Naive thymus-derived CD4-positive, alpha-beta T cell (primary cell): ENCODE measurements at regions of chr6 and their contacts with region 1.

Region 1: DNA sequence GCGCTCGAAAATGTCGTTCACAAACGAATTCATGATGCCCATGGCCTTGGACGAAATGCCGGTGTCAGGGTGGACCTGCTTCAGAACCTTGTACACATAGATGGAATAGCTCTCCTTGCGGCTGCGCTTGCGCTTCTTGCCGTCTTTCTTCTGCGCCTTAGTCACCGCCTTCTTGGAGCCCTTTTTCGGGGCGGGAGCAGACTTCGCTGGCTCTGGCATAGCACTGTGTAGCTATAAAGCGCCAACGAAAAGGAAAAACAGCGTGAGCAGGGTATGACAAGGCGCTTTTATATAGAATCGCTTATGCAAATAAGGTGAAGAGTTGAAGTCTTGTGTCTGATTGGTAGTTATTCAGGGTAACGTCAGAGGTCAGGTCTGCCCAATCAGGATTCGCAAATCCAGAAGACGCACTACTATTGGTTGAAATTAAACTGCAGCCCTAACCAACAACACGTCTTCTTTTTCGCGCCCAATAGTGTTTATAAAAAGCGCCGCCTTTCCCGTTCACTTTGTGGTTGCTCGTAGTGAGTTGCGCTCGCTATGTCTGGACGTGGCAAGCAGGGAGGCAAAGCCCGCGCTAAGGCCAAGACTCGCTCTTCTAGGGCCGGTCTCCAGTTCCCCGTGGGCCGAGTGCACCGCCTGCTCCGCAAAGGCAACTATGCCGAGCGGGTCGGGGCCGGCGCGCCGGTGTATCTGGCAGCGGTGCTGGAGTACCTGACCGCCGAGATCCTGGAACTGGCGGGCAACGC is 114.8 kb upstream of the PRSS16 start:
- DNase-seq: peak; percentile 73 to 99 (median 97)
- ATAC-seq: peak; percentile 93
- H3K4me3 ChIP-seq: peak overlapping the region; percentile 90
- H3K4me3 Mint-ChIP-seq: no peak overlapping the region
- H3K27ac ChIP-seq: peak overlapping the region; percentile 81
- H3K27ac Mint-ChIP-seq: no peak overlapping the region
- H3K4me1 ChIP-seq: peaks cover 10 to 18% of the 10 kb centered on the region in 2 donors
- H3K4me1 Mint-ChIP-seq: peaks cover 6 to 49% (median 21%) of the 10 kb centered on the region in 7 donors
- H3K27me3 ChIP-seq: no peaks in the 10 kb centered on the region
- H3K27me3 Mint-ChIP-seq: no peaks in the 10 kb centered on the region

Region 2: GRCh38 chr6:26031595-26032339 is 1100.9 kb before region 1 on chr6:
- CTCF ChIA-PET with region 1: no interaction called
- POLR2A ChIA-PET with region 1: interaction called, 33 read pairs
- intact Hi-C with region 1: loop called (anchors 1 to 2 kb)
- DNase-seq: peak; percentile 56 to 94 (median 90)
- ATAC-seq: peak; percentile 79
- H3K4me3 ChIP-seq: peak overlapping the region; percentile 70
- H3K4me3 Mint-ChIP-seq: peak overlapping the region; percentile 89 to 98 (median 96)
- H3K27ac ChIP-seq: peak overlapping the region; percentile 69
- H3K27ac Mint-ChIP-seq: peak overlapping the region; percentile 93 to 98 (median 96)
- H3K4me1 ChIP-seq: peaks cover 23 to 31% of the 10 kb centered on the region in 2 donors
- H3K4me1 Mint-ChIP-seq: peaks cover 14 to 69% (median 43%) of the 10 kb centered on the region in 7 donors
- H3K27me3 ChIP-seq: no peaks in the 10 kb centered on the region
- H3K27me3 Mint-ChIP-seq: peaks cover 0 to 7% (median 0%) of the 10 kb centered on the region in 5 donors

Region 3: DNA sequence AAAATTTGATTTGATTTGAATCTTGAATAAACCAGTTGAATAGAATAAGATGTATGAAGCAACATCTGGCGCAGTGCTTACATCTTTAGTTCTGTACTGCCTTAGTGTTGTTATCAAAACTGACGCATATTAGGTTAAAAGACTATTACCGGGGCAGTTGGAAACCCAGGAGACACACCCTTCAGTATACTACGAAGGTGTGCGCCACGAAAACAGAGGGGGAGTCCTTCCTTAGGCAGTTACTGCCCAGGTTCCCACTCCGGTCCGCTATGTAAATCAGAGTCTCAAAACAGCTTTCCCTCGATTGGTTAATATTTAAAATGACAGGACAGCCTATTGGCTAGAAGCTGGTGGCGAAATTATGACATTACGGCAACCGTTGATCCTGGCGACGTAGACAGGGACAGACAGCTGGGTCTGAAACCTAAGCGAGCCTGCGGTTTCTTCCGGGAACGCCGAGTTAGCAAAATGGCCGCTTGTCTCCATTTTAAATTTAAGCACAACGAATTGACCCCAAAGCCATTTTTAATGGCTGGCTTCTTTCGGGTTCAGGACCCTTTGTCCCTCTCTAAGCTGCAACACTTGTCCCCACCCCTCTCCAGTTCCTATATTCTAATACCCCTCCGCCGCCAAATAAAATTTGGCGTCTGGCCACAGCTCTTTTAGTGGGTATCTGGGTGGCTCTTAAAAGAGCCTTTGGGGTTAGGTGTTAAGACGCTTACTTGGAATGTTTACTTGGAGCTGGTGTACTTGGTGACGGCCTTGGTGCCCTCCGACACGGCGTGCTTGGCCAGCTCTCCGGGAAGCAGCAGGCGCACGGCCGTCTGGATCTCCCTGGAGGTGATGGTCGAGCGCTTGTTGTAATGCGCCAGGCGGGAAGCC is 1009.7 kb before region 1 on chr6:
- CTCF ChIA-PET with region 1: no interaction called
- POLR2A ChIA-PET with region 1: interaction called, 34 read pairs
- intact Hi-C with region 1: loop called in 1 of 2 experiments (anchors 1 kb)
- DNase-seq: peak; percentile 68 to 99 (median 96)
- ATAC-seq: peak; percentile 78
- H3K4me3 ChIP-seq: peak overlapping the region; percentile 94
- H3K4me3 Mint-ChIP-seq: peak overlapping the region; percentile 92 to 100 (median 98)
- H3K27ac ChIP-seq: peak overlapping the region; percentile 86
- H3K27ac Mint-ChIP-seq: peak overlapping the region; percentile 97 to 100 (median 99)
- H3K4me1 ChIP-seq: peaks cover 18 to 23% of the 10 kb centered on the region in 2 donors
- H3K4me1 Mint-ChIP-seq: peaks cover 22 to 54% (median 30%) of the 10 kb centered on the region in 7 donors
- H3K27me3 ChIP-seq: no peaks in the 10 kb centered on the region
- H3K27me3 Mint-ChIP-seq: peaks cover 0 to 21% (median 0%) of the 10 kb centered on the region in 5 donors

Region 4: DNA sequence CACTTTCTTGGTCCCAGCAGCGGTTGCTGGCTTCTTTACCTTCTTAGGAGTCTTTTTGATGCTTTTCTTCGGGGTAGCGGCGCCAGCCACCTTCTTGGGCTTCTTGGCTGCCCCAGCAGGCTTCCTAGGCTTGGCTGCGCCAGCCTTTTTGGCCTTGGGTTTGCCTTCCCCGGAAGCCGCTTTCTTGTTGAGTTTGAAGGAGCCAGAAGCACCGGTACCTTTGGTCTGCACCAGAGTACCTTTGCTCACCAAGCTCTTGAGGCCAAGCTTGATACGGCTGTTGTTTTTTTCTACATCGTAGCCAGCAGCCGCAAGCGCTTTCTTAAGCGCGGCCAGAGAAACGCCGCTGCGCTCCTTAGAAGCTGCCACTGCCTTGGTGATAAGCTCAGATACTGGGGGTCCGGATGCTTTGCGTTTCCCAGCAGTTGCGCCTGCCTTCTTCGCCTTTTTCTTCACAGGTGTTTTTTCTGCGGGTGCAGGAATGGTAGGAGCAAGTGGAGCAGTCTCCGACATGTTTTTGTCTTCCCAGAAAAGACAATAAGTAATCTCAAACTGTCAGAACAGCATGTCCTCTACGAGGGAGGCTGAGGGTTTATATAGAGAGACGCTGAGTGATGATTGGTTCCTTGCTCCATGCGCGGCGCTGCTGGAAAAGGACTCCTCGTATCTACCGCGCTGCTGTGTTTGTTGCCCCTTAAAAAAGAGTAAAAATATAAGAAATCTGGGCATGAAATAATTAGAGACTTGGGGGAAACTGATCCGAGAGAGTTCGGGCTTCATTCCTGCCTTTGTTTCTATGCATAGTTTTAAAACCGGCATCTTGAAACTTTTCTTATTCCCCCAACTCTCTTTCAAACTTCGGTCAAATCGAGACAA is 898.0 kb before region 1 on chr6:
- CTCF ChIA-PET with region 1: no interaction called
- POLR2A ChIA-PET with region 1: interaction called, 30 read pairs
- intact Hi-C with region 1: no loop called
- DNase-seq: peak; percentile 48 to 94 (median 85)
- ATAC-seq: peak; percentile 80
- H3K4me3 ChIP-seq: peak overlapping the region; percentile 93
- H3K4me3 Mint-ChIP-seq: peak overlapping the region; percentile 87 to 99 (median 94)
- H3K27ac ChIP-seq: peak overlapping the region; percentile 87
- H3K27ac Mint-ChIP-seq: peak overlapping the region; percentile 93 to 100 (median 98)
- H3K4me1 ChIP-seq: peaks cover under 1 to 18% of the 10 kb centered on the region in 2 donors
- H3K4me1 Mint-ChIP-seq: peaks cover 18 to 52% (median 38%) of the 10 kb centered on the region in 7 donors
- H3K27me3 ChIP-seq: no peaks in the 10 kb centered on the region
- H3K27me3 Mint-ChIP-seq: peaks cover 0 to 15% (median 0%) of the 10 kb centered on the region in 5 donors

Region 5: DNA sequence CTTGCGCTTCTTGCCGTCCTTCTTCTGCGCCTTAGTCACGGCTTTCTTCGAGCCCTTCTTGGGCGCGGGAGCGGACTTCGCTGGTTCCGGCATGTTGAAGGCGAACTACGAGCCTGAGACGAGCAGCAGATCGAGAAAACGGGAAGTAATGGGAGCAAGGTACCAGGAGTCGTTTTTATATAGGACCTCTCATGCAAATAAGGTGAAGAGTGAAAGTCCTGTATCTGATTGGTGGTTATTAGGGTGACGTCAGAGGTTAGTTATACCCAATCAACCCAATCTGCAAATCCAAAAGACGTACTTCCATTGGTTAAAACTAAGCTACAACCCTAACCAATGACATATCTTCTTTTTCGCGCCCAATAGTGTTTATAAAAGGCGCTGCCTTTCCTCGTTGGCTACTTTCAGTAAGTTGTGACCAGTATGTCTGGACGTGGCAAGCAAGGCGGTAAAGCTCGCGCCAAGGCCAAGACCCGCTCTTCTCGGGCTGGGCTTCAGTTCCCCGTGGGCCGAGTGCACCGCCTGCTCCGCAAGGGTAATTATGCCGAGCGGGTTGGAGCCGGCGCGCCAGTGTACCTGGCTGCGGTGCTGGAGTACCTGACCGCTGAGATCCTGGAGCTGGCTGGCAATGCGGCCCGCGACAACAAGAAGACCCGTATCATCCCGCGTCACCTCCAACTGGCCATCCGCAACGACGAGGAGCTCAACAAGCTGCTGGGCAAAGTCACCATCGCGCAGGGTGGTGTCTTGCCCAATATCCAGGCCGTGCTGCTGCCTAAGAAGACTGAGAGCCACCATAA is 14.2 kb after region 1 on chr6:
- CTCF ChIA-PET with region 1: interaction called, 45 read pairs
- POLR2A ChIA-PET with region 1: interaction called, 795 read pairs
- intact Hi-C with region 1: loop called (anchors 1 kb)
- DNase-seq: peak; percentile 71 to 96 (median 92)
- ATAC-seq: peak; percentile 92
- H3K4me3 ChIP-seq: peak overlapping the region; percentile 90
- H3K4me3 Mint-ChIP-seq: no peak overlapping the region
- H3K27ac ChIP-seq: peak overlapping the region; percentile 89
- H3K27ac Mint-ChIP-seq: no peak overlapping the region
- H3K4me1 ChIP-seq: peaks cover 6 to 7% of the 10 kb centered on the region in 2 donors
- H3K4me1 Mint-ChIP-seq: peaks cover 0 to 26% (median 14%) of the 10 kb centered on the region in 7 donors
- H3K27me3 ChIP-seq: no peaks in the 10 kb centered on the region
- H3K27me3 Mint-ChIP-seq: no peaks in the 10 kb centered on the region

Region 6: DNA sequence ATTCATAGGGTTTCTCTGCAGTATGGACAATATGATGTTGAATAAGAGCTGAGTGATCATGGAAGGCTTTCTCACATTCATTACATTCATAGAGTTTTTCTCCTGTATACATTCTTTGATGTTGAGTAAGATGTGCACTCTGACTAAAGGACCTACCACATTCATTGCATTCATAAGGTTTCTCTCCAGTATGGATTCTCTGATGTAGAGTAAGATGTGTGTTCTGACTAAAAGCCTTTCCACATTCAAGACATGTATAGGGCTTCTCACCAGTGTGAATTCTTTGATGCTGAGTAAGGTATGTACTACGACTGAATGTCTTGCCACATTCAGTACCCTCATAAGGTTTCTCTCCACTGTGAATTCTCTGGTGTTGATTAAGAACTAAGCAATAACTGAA is 226.5 kb after region 1 on chr6:
- CTCF ChIA-PET with region 1: no interaction called
- POLR2A ChIA-PET with region 1: no interaction called
- intact Hi-C with region 1: no loop called
- DNase-seq: no peak
- ATAC-seq: no peak
- H3K4me3 ChIP-seq: no peak overlapping the region
- H3K4me3 Mint-ChIP-seq: no peak overlapping the region
- H3K27ac ChIP-seq: no peak overlapping the region
- H3K27ac Mint-ChIP-seq: no peak overlapping the region
- H3K4me1 ChIP-seq: no peaks in the 10 kb centered on the region
- H3K4me1 Mint-ChIP-seq: no peaks in the 10 kb centered on the region
- H3K27me3 ChIP-seq: no peaks in the 10 kb centered on the region
- H3K27me3 Mint-ChIP-seq: peaks cover 0 to 4% (median 0%) of the 10 kb centered on the region in 5 donors

Region 7: GRCh38 chr6:27825025-27825793 is 692.5 kb after region 1 on chr6:
- CTCF ChIA-PET with region 1: no interaction called
- POLR2A ChIA-PET with region 1: interaction called, 12 read pairs
- intact Hi-C with region 1: no loop called
- DNase-seq: no peak
- ATAC-seq: no peak
- H3K4me3 ChIP-seq: peak overlapping the region; percentile 87
- H3K4me3 Mint-ChIP-seq: peak overlapping the region; percentile 82 to 99 (median 94)
- H3K27ac ChIP-seq: peak overlapping the region; percentile 89
- H3K27ac Mint-ChIP-seq: peak overlapping the region; percentile 90 to 100 (median 98)
- H3K4me1 ChIP-seq: peaks cover 6% of the 10 kb centered on the region in 2 donors
- H3K4me1 Mint-ChIP-seq: peaks cover 11 to 50% (median 33%) of the 10 kb centered on the region in 7 donors
- H3K27me3 ChIP-seq: no peaks in the 10 kb centered on the region
- H3K27me3 Mint-ChIP-seq: peaks cover 0 to 4% (median 0%) of the 10 kb centered on the region in 5 donors

Region 8: GRCh38 chr6:28838634-28839442 is 1706.1 kb after region 1 on chr6:
- CTCF ChIA-PET with region 1: no interaction called
- POLR2A ChIA-PET with region 1: no interaction called
- intact Hi-C with region 1: loop called in 1 of 2 experiments (anchors 1 kb)
- DNase-seq: peak; percentile 66 to 89 (median 81)
- ATAC-seq: peak; percentile 79
- H3K4me3 ChIP-seq: peak overlapping the region; percentile 83
- H3K4me3 Mint-ChIP-seq: peak overlapping the region; percentile 86 to 99 (median 96)
- H3K27ac ChIP-seq: peak overlapping the region; percentile 60
- H3K27ac Mint-ChIP-seq: peak overlapping the region; percentile 83 to 98 (median 93)
- H3K4me1 ChIP-seq: peaks cover 8 to 11% of the 10 kb centered on the region in 2 donors
- H3K4me1 Mint-ChIP-seq: peaks cover 13 to 31% (median 20%) of the 10 kb centered on the region in 7 donors
- H3K27me3 ChIP-seq: no peaks in the 10 kb centered on the region
- H3K27me3 Mint-ChIP-seq: peaks cover 17 to 66% (median 25%) of the 10 kb centered on the region in 5 donors